Activated CD4-positive, alpha-beta memory T cell treated with anti-CD3 and anti-CD28 coated beads for 36 hours (primary cell): ENCODE measurements at regions of chr20 and their contacts with region 1.

Region 1: GRCh38 chr20:45971675-45972499 is at the start of gene ZNF335:
- DNase-seq: peak; percentile 95
- H3K4me3 Mint-ChIP-seq: peak within 1 kb of the TSS; percentile 85
- H3K27ac Mint-ChIP-seq: peak within 1 kb of the TSS; percentile 99
- H3K4me1 Mint-ChIP-seq: peaks cover 21% of the 10 kb centered on the region
- H3K27me3 Mint-ChIP-seq: peaks cover 3% of the 10 kb centered on the region
- total RNA-seq, gene ZNF335: 24.1 to 26.0 TPM

Region 2: GRCh38 chr20:45812157-45813020 is 159.5 kb before region 1 on chr20 and contains the start of gene UBE2C:
- CTCF ChIA-PET with region 1: interaction called, 6 read pairs
- POLR2A ChIA-PET with region 1: interaction called, 6 read pairs
- intact Hi-C with region 1: loop called (anchors 5 kb)
- DNase-seq: peak; percentile 98
- H3K4me3 Mint-ChIP-seq: peak within 1 kb of the TSS; percentile 91
- H3K27ac Mint-ChIP-seq: peak within 1 kb of the TSS; percentile 68
- H3K4me1 Mint-ChIP-seq: peaks cover 13% of the 10 kb centered on the region
- H3K27me3 Mint-ChIP-seq: no peaks in the 10 kb centered on the region
- total RNA-seq, gene UBE2C: 192 to 196 TPM

Region 3: DNA sequence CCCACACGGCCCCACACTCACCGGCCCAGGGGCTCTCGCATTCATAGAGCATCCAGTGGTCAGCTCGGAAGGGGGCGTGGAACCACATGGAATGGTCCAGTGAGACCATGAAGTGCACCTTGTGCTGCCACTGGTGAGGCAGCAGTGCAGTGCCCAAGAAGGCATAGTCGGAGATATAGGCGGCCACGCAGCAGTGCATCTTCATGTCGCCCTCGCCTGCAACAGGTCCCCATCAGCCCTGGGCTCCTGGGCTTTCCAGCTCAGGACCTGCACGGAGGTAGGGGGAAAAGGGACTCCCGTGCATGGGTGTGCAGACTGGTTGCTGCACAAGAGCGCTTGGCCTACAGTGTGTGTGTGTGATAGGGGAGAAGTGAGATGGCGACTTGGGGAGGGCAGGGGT is 128.4 kb before region 1 on chr20:
- CTCF ChIA-PET with region 1: no interaction called
- POLR2A ChIA-PET with region 1: no interaction called
- intact Hi-C with region 1: no loop called
- DNase-seq: no peak
- H3K4me3 Mint-ChIP-seq: no peak overlapping the region
- H3K27ac Mint-ChIP-seq: no peak overlapping the region
- H3K4me1 Mint-ChIP-seq: no peaks in the 10 kb centered on the region
- H3K27me3 Mint-ChIP-seq: no peaks in the 10 kb centered on the region

Region 4: GRCh38 chr20:45857114-45857881 is 114.6 kb before region 1 on chr20 and contains the starts of genes ACOT8 and ZSWIM3:
- CTCF ChIA-PET with region 1: interaction called, 4 read pairs
- POLR2A ChIA-PET with region 1: no interaction called
- intact Hi-C with region 1: loop called (anchors 1 kb)
- DNase-seq: peak; percentile 96
- H3K4me3 Mint-ChIP-seq: peak within 1 kb of the TSS; percentile 97
- H3K27ac Mint-ChIP-seq: peak within 1 kb of the TSS; percentile 97
- H3K4me1 Mint-ChIP-seq: peaks cover 35% of the 10 kb centered on the region
- H3K27me3 Mint-ChIP-seq: no peaks in the 10 kb centered on the region
- total RNA-seq, gene ACOT8: 25.5 to 29.0 TPM
- total RNA-seq, gene ZSWIM3: 4.7 TPM

Region 5: DNA sequence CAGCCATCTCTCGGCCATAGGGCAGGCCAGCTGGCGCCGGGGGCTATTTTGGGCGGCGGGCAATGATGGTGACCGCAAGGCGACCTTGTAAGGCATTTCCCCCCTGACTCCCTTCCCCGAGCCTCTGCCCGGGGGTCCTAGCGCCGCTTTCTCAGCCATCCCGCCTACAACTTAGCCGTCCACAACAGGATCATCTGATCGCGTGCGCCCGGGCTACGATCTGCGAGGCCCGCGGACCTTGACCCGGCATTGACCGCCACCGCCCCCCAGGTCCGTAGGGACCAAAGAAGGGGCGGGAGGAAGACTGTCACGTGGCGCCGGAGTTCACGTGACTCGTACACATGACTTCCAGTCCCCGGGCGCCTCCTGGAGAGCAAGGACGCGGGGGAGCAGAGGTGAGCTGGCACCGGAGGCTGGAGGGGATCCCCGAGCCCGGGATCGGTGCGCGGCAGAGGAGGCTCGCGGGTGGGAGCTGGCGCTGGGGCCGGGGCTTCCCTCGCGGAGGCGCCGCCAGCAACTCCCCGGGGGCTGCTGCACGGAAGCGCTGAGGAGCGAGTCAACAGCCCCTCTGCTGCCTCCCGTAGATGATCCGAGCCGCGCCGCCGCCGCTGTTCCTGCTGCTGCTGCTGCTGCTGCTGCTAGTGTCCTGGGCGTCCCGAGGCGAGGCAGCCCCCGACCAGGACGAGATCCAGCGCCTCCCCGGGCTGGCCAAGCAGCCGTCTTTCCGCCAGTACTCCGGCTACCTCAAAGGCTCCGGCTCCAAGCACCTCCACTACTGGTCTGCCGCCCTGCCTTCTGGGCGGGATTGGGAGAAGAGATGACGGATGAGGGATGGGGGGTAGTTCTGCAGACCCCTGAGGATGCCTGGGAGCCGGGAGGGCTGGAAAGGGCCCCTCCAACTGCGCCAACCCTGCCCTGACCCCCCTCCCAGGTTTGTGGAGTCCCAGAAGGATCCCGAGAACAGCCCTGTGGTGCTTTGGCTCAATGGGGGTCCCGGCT is 80.6 kb before region 1 on chr20 and contains the starts of genes CTSA and NEURL2:
- CTCF ChIA-PET with region 1: interaction called, 4 read pairs
- POLR2A ChIA-PET with region 1: no interaction called
- intact Hi-C with region 1: loop called (anchors 2 kb)
- DNase-seq: peak; percentile 92
- H3K4me3 Mint-ChIP-seq: peak within 1 kb of the TSS; percentile 85
- H3K27ac Mint-ChIP-seq: peak within 1 kb of the TSS; percentile 81
- H3K4me1 Mint-ChIP-seq: peaks cover 32% of the 10 kb centered on the region
- H3K27me3 Mint-ChIP-seq: no peaks in the 10 kb centered on the region
- total RNA-seq, gene CTSA: 49.8 to 54.8 TPM
- total RNA-seq, gene NEURL2: 2.3 to 2.5 TPM

Region 6: GRCh38 chr20:45946149-45946970 is 25.5 kb before region 1 on chr20:
- CTCF ChIA-PET with region 1: interaction called, 67 read pairs
- POLR2A ChIA-PET with region 1: interaction called, 14 read pairs
- intact Hi-C with region 1: no loop called
- DNase-seq: peak; percentile 74
- H3K4me3 Mint-ChIP-seq: no peak overlapping the region
- H3K27ac Mint-ChIP-seq: peak overlapping the region; percentile 79
- H3K4me1 Mint-ChIP-seq: peaks cover 28% of the 10 kb centered on the region
- H3K27me3 Mint-ChIP-seq: no peaks in the 10 kb centered on the region

Region 7: DNA sequence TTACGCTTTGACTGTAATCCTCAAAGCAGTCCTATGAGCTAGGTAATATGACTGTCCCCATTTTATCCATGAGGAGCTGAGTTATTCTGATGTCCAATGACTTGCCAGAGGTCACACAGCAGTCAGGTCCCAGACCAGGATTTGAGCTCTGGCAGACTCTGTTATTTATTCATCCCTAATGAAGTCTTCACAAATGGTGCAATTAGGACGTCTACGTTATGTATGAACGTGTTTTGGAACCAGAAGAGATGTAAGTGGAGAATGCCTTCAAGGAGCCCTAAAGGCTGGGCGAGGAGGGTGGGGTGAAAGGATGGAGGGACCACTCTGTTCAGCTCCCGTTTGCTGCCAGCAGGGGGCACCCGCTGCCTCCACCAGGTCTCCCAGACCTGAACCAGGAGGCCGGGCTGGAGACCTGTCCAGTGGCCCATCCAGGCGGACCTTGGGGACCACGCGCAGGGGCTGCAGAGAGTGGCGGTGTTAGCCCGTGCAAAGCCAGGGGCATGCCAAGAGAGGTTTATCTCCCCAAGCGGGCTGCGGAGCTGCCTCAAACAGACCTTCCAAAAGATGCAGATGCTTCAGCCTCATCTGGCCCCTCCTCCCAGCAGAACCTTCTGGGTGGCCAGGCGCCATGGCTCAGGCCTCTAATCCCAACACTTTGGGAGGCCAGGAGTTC is 15.4 kb after region 1 on chr20:
- CTCF ChIA-PET with region 1: interaction called, 98 read pairs
- POLR2A ChIA-PET with region 1: no interaction called
- intact Hi-C with region 1: no loop called
- DNase-seq: peak; percentile 85
- H3K4me3 Mint-ChIP-seq: no peak overlapping the region
- H3K27ac Mint-ChIP-seq: no peak overlapping the region
- H3K4me1 Mint-ChIP-seq: peaks cover 3% of the 10 kb centered on the region
- H3K27me3 Mint-ChIP-seq: no peaks in the 10 kb centered on the region

Region 8: GRCh38 chr20:46035713-46036112 is 63.8 kb after region 1 on chr20:
- CTCF ChIA-PET with region 1: no interaction called
- POLR2A ChIA-PET with region 1: no interaction called
- intact Hi-C with region 1: no loop called
- DNase-seq: no peak
- H3K4me3 Mint-ChIP-seq: no peak overlapping the region
- H3K27ac Mint-ChIP-seq: no peak overlapping the region
- H3K4me1 Mint-ChIP-seq: no peaks in the 10 kb centered on the region
- H3K27me3 Mint-ChIP-seq: peaks cover 52% of the 10 kb centered on the region

Region 9: GRCh38 chr20:46089417-46090388 is 117.8 kb after region 1 on chr20 and contains the start of gene NCOA5:
- CTCF ChIA-PET with region 1: no interaction called
- POLR2A ChIA-PET with region 1: no interaction called
- intact Hi-C with region 1: loop called (anchors 1 kb)
- DNase-seq: peak; percentile 97
- H3K4me3 Mint-ChIP-seq: peak within 1 kb of the TSS; percentile 88
- H3K27ac Mint-ChIP-seq: peak within 1 kb of the TSS; percentile 83
- H3K4me1 Mint-ChIP-seq: peaks cover 49% of the 10 kb centered on the region
- H3K27me3 Mint-ChIP-seq: no peaks in the 10 kb centered on the region
- total RNA-seq, gene NCOA5: 13.1 to 13.7 TPM